Natural killer cell (primary cell): ENCODE measurements at regions of chrX and their contacts with region 1.

Region 1: DNA sequence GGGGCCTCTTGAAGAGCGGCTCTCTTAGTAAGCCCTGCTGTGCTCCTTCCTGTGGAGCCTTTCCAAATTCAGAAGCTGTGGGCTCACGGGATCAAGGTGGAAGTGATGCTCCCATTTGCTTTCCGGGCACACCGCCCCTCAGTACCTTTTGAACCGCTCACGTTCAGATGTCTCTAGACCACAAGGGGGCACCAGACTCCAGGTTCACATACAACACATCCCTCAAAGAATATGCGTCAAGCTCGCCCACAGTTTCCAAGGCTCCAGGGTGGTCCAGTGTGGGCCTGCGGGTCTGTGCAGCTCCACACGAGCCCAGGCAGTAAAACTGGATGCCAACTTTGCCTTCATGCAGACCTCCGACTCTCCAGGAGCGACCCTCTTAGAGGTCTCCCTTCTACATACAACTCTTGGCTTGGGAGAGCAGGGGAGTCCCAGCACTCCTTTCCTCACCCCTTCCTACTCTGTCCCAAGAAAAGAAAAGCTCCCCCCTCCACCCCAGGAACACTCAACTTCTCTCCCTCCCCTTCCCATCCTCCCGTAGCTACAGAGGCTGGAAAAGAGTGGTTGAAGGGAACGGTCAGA is 11.0 kb downstream of the SUPT20HL1 start:
- DNase-seq: peak; percentile 25 to 80
- ATAC-seq: peak; percentile 64 to 83 (median 80)
- H3K4me3 ChIP-seq: no peak overlapping the region
- H3K4me3 Mint-ChIP-seq: no peak overlapping the region
- H3K27ac ChIP-seq: no peak overlapping the region
- H3K27ac Mint-ChIP-seq: no peak overlapping the region
- H3K4me1 ChIP-seq: peaks cover 6% of the 10 kb centered on the region
- H3K4me1 Mint-ChIP-seq: peaks cover 4% of the 10 kb centered on the region in 2 donors
- H3K27me3 ChIP-seq: no peaks in the 10 kb centered on the region
- H3K27me3 Mint-ChIP-seq: peaks cover 6 to 29% of the 10 kb centered on the region in 2 donors
- CTCF ChIP-seq: peak; percentile 48

Region 2: GRCh38 chrX:25144043-25144940 is 772.8 kb after region 1 on chrX:
- intact Hi-C with region 1: loop called (anchors 5 kb)
- DNase-seq: peak; percentile 15 to 60
- ATAC-seq: peak in 1 of 3 donors; percentile 43
- H3K4me3 ChIP-seq: no peak overlapping the region
- H3K4me3 Mint-ChIP-seq: no peak overlapping the region
- H3K27ac ChIP-seq: no peak overlapping the region
- H3K27ac Mint-ChIP-seq: no peak overlapping the region
- H3K4me1 ChIP-seq: no peaks in the 10 kb centered on the region
- H3K4me1 Mint-ChIP-seq: no peaks in the 10 kb centered on the region
- H3K27me3 ChIP-seq: no peaks in the 10 kb centered on the region
- H3K27me3 Mint-ChIP-seq: peaks cover 6 to 43% of the 10 kb centered on the region in 2 donors
- CTCF ChIP-seq: peak; percentile 55